T-cell (primary cell): ENCODE measurements at regions of chr6 and their contacts with region 1.

Region 1: GRCh38 chr6:154569156-154569862 is 58.8 kb upstream of the CNKSR3 start:
- DNase-seq: no peak
- ATAC-seq: no peak
- H3K4me3 ChIP-seq: no peak overlapping the region
- H3K4me3 Mint-ChIP-seq: no peak overlapping the region
- H3K27ac ChIP-seq: no peak overlapping the region
- H3K27ac Mint-ChIP-seq: no peak overlapping the region
- H3K4me1 ChIP-seq: no peaks in the 10 kb centered on the region
- H3K4me1 Mint-ChIP-seq: no peaks in the 10 kb centered on the region
- H3K27me3 ChIP-seq: no peaks in the 10 kb centered on the region
- H3K27me3 Mint-ChIP-seq: peaks cover 3% of the 10 kb centered on the region in 2 donors

Region 2: DNA sequence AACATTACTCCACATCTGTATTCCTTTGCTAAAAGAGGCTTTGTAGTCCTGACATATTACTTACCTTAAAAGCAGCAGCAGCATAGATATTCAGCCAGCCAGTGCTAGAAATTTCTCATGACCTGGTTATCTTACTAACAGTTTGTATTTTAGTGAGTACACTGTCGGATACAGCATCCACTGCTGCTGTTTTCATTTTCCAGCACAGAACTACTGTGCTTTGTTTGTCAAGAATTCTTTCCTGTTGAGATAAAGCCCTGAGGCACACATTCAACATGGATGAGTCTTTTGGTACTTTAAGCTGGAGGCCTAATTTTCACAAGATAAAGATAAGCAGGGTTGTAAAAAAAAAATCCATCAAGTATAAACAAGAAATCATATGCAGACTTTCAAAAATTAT is 841.4 kb before region 1 on chr6:
- CTCF ChIA-PET with region 1: no interaction called
- POLR2A ChIA-PET with region 1: interaction called in 1 of 2 experiments, 20 read pairs
- DNase-seq: no peak
- ATAC-seq: no peak
- H3K4me3 ChIP-seq: no peak overlapping the region
- H3K4me3 Mint-ChIP-seq: no peak overlapping the region
- H3K27ac ChIP-seq: no peak overlapping the region
- H3K27ac Mint-ChIP-seq: no peak overlapping the region
- H3K4me1 ChIP-seq: no peaks in the 10 kb centered on the region
- H3K4me1 Mint-ChIP-seq: no peaks in the 10 kb centered on the region
- H3K27me3 ChIP-seq: no peaks in the 10 kb centered on the region
- H3K27me3 Mint-ChIP-seq: no peaks in the 10 kb centered on the region